Sigmoid colon (tissue), 7 donors: ENCODE measurements at regions of chr16 and their contacts with region 1.

Region 1: GRCh38 chr16:57244767-57245471 is at the start of gene ARL2BP:
- DNase-seq: peak; percentile 99
- H3K4me3 ChIP-seq: peak within 1 kb of the TSS; percentile 62 to 90 (median 86)
- H3K27ac ChIP-seq: peak within 1 kb of the TSS; percentile 93 to 96 (median 94)
- H3K4me1 ChIP-seq: peaks cover 0 to 14% (median 8%) of the 10 kb centered on the region in 4 donors
- H3K27me3 ChIP-seq: no peaks in the 10 kb centered on the region
- CTCF ChIP-seq: no peak
- EP300 ChIP-seq: no peak
- POLR2A ChIP-seq: peak; percentile 33 to 89
- total RNA-seq, gene ARL2BP: 64.7 to 85.6 (median 74.4) TPM

Region 2: DNA sequence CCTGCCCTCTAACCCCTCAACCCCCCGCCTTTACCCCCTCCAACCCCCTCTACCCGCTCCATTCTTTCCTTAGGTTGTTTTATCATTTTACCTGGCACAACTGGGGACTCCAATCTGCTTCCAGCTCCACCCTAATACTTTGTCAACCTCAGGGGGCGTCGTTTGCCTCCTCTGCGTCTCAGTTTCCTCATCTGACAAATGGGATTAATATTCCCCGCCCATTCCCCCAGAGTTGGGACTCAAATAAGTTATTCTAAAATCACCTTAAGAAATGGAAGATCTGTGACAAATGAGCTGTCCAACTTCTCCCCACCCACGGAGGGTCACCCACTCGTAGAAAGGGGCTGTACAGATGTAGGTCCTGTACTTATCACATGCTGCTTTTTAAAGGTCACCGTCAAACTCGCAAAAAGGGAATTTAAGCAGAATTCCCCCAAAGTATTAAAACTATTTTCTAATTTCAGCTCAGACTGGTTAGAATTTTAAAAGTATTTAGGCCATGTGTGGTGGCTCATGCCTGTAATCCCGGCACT is 193.2 kb before region 1 on chr16:
- intact Hi-C with region 1: no loop called
- DNase-seq: no peak
- H3K4me3 ChIP-seq: no peak overlapping the region
- H3K27ac ChIP-seq: no peak overlapping the region
- H3K4me1 ChIP-seq: no peaks in the 10 kb centered on the region
- H3K27me3 ChIP-seq: no peaks in the 10 kb centered on the region
- CTCF ChIP-seq: no peak
- EP300 ChIP-seq: no peak
- POLR2A ChIP-seq: no peak

Region 3: DNA sequence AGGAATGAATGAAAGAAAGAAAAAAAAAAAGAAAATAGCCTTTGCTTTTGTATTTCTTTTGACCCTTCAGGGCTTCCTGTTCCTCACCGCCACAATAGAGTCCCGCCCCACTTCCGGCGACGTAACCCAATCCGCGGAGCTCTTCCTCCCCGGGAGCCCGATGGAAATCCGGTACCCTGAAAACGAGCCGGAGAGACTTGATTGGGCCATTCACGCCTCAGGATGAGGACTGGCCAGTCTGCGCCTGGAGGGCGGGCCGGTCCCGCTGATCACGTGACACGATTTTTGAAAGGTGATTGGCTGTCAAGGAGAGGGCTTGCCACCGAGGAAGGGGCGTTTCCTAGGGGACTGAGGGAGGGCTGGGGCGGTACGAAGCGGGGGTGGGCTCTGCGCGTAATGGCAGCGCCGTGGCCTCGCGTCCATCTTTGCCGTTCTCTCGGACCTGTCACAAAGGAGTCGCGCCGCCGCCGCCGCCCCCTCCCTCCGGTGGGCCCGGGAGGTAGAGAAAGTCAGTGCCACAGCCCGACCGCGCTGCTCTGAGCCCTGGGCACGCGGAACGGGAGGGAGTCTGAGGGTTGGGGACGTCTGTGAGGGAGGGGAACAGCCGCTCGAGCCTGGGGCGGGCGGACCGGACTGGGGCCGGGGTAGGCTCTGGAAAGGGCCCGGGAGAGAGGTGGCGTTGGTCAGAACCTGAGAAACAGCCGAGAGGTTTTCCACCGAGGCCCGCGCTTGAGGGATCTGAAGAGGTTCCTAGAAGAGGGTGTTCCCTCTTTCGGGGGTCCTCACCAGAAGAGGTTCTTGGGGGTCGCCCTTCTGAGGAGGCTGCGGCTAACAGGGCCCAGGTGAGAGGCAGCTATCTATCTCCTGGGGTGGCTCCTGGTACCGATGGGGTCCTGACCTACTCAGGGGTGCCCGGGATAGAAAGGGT is 58.7 kb before region 1 on chr16 and contains the starts of genes PSME3IP1 and RSPRY1:
- intact Hi-C with region 1: loop called (anchors 1 kb)
- DNase-seq: peak; percentile 99
- H3K4me3 ChIP-seq: peak within 1 kb of the TSS; percentile 88 to 99 (median 96)
- H3K27ac ChIP-seq: peak within 1 kb of the TSS; percentile 97 to 99 (median 98)
- H3K4me1 ChIP-seq: peaks cover 0 to 57% (median 42%) of the 10 kb centered on the region in 4 donors
- H3K27me3 ChIP-seq: no peaks in the 10 kb centered on the region
- CTCF ChIP-seq: no peak
- EP300 ChIP-seq: no peak
- POLR2A ChIP-seq: peak; percentile 81 to 83
- total RNA-seq, gene PSME3IP1: 60.1 to 81.3 (median 76.9) TPM
- total RNA-seq, gene RSPRY1: 30.6 to 42.7 (median 34.1) TPM